ENCODE measurements at regions of chr18 and their contacts with region 1.

Region 1: GRCh38 chr18:9079818-9080528 is 22.5 kb upstream of the NDUFV2 start:
- DNase-seq: no peak
- H3K4me3 ChIP-seq: no peak overlapping the region
- H3K27ac ChIP-seq: peak overlapping the region in 1 of 5 donors; percentile 59
- H3K4me1 ChIP-seq: no peaks in the 10 kb centered on the region
- H3K27me3 ChIP-seq: no peaks in the 10 kb centered on the region
- CTCF ChIP-seq: no peak
- POLR2A ChIP-seq: no peak

Region 2: GRCh38 chr18:9017170-9017904 is 62.6 kb before region 1 on chr18:
- intact Hi-C with region 1: no loop called
- DNase-seq: peak; percentile 76 to 92 (median 86)
- H3K4me3 ChIP-seq: peak overlapping the region in 1 of 4 donors; percentile 52
- H3K27ac ChIP-seq: peak overlapping the region; percentile 40 to 88 (median 81)
- H3K4me1 ChIP-seq: peaks cover 10 to 16% of the 10 kb centered on the region in 2 donors
- H3K27me3 ChIP-seq: no peaks in the 10 kb centered on the region
- CTCF ChIP-seq: no peak
- POLR2A ChIP-seq: peak in 1 of 2 donors; percentile 41

Region 3: DNA sequence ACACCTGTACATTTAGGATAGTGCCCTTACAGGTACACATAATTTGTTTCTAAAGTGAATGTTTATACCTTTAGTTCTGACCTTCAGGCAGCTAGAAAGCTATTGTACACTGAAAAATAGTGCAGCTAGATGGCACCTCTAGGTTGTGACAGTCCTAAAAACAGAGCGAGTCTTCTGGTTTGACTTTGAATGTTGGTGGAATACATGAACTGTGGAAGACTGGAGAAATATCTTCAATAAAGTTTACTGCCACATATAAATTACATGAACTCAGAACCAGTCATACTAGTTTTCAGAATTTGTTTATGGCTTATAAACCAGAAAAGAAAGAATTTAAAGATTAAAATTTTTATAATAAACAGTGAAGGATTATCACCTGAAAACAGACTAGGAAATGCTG is 195.9 kb after region 1 on chr18:
- intact Hi-C with region 1: no loop called
- DNase-seq: no peak
- H3K4me3 ChIP-seq: no peak overlapping the region
- H3K27ac ChIP-seq: no peak overlapping the region
- H3K4me1 ChIP-seq: no peaks in the 10 kb centered on the region
- H3K27me3 ChIP-seq: no peaks in the 10 kb centered on the region
- CTCF ChIP-seq: no peak
- POLR2A ChIP-seq: no peak

Region 4: DNA sequence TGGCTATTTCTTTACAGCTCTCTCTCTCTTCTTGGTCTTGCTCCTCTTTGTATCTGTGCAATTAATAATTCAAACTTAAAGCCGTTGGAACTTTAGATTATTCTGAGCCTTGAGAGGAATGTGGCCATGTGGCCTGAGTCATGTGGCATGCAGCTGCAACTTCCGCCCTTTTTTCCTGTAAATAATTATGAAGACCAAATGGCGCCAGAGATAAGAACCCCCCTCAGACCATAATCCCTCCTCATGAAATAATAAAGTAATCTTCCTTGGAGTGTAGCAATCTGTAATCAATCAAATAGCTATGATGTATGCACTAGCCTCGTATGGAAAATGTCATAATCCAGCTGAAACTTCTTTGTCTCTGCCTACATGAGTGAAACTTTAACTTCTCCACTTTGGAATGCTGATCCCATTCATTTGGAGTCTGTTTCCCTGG is 241.1 kb after region 1 on chr18:
- intact Hi-C with region 1: loop called in 1 of 2 experiments (anchors 10 kb)
- DNase-seq: no peak
- H3K4me3 ChIP-seq: no peak overlapping the region
- H3K27ac ChIP-seq: no peak overlapping the region
- H3K4me1 ChIP-seq: no peaks in the 10 kb centered on the region
- H3K27me3 ChIP-seq: no peaks in the 10 kb centered on the region
- CTCF ChIP-seq: no peak
- POLR2A ChIP-seq: no peak

Region 5: GRCh38 chr18:9516437-9517064 is 436.6 kb after region 1 on chr18:
- intact Hi-C with region 1: loop called in 1 of 2 experiments (anchors 10 kb)
- DNase-seq: peak in 1 of 7 donors; percentile 18
- H3K4me3 ChIP-seq: no peak overlapping the region
- H3K27ac ChIP-seq: no peak overlapping the region
- H3K4me1 ChIP-seq: peaks cover 10 to 12% of the 10 kb centered on the region in 2 donors
- H3K27me3 ChIP-seq: no peaks in the 10 kb centered on the region
- CTCF ChIP-seq: peak; percentile 72 to 84 (median 78)
- POLR2A ChIP-seq: no peak